CD4-positive, alpha-beta T cell (primary cell): ENCODE measurements at regions of chr4 and their contacts with region 1.

Region 1: DNA sequence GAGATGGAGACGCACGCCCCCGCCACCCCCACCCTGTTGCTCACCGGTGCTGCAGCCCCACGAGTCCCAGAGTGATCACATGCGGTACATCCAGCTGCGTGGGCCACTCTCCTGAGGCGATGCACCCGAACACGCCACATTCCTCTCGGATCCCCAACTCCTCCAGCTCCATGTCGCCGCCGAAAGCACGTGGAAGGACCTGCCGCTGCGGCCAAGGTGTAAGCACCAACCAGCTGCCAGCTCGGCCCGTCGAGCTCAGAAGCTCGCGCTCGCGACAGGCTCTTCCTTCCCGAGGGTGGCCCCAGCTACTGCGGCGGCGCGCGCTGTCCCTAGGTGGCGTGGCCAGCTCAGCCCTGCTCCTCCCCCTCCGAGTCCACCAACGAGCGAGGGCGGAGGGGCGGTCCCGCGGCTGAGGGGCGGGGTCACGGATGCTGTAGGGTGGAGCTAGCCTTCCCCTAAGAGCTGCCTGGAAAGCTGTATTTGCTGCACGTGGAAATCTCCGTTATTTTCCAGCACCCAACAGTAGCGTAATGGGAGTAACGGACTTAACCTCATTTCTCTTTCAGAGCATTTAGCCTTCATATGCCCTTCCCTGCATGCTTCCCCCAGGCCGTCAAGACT is at the start of gene PPAT:
- DNase-seq: peak; percentile 97 to 99 (median 99)
- ATAC-seq: peak; percentile 80
- H3K4me3 ChIP-seq: peak within 1 kb of the TSS; percentile 91
- H3K4me3 Mint-ChIP-seq: peak within 1 kb of the TSS; percentile 92
- H3K27ac ChIP-seq: peak within 1 kb of the TSS; percentile 59 to 91
- H3K27ac Mint-ChIP-seq: peak within 1 kb of the TSS; percentile 77
- H3K4me1 ChIP-seq: peaks cover 26% of the 10 kb centered on the region
- H3K4me1 Mint-ChIP-seq: peaks cover 41% of the 10 kb centered on the region
- H3K27me3 ChIP-seq: no peaks in the 10 kb centered on the region
- H3K27me3 Mint-ChIP-seq: no peaks in the 10 kb centered on the region
- CTCF ChIP-seq: peak; percentile 23
- total RNA-seq, gene PPAT: 4.7 to 6.3 TPM

Region 2: GRCh38 chr4:55853484-55854046 is 581.9 kb before region 1 on chr4 and contains the start of gene EXOC1:
- CTCF ChIA-PET with region 1: no interaction called
- POLR2A ChIA-PET with region 1: no interaction called
- intact Hi-C with region 1: loop called in 1 of 2 experiments (anchors 10 kb)
- DNase-seq: peak; percentile 93 to 99 (median 97)
- ATAC-seq: peak; percentile 95
- H3K4me3 ChIP-seq: peak within 1 kb of the TSS; percentile 96
- H3K4me3 Mint-ChIP-seq: no peak within 1 kb of the TSS
- H3K27ac ChIP-seq: peak within 1 kb of the TSS; percentile 68 to 86
- H3K27ac Mint-ChIP-seq: peak within 1 kb of the TSS; percentile 60
- H3K4me1 ChIP-seq: peaks cover 28% of the 10 kb centered on the region
- H3K4me1 Mint-ChIP-seq: peaks cover 33% of the 10 kb centered on the region
- H3K27me3 ChIP-seq: no peaks in the 10 kb centered on the region
- H3K27me3 Mint-ChIP-seq: no peaks in the 10 kb centered on the region
- CTCF ChIP-seq: no peak
- total RNA-seq, gene EXOC1: 15.2 to 15.7 TPM

Region 3: DNA sequence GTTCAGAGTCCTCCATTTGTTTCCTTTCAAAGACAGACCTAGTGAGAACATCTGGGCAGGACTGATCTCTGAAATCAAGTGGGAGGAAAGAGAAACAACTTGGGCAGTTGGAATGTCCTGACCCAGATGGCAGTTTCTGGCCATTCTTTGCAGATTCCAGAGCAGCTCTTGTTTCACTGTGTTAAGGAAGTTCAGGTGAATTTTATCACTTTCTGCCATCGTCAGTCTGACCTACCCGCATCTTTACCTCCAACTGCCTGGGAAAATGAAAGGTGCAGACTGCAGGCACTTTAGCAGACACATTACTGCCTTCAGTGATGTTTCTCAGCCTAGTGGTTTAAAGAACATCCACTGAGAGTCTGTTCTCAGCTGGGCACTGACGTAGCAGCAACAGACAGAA is 270.5 kb before region 1 on chr4:
- CTCF ChIA-PET with region 1: no interaction called
- POLR2A ChIA-PET with region 1: no interaction called
- intact Hi-C with region 1: no loop called
- DNase-seq: no peak
- ATAC-seq: no peak
- H3K4me3 ChIP-seq: no peak overlapping the region
- H3K4me3 Mint-ChIP-seq: no peak overlapping the region
- H3K27ac ChIP-seq: no peak overlapping the region
- H3K27ac Mint-ChIP-seq: no peak overlapping the region
- H3K4me1 ChIP-seq: no peaks in the 10 kb centered on the region
- H3K4me1 Mint-ChIP-seq: no peaks in the 10 kb centered on the region
- H3K27me3 ChIP-seq: no peaks in the 10 kb centered on the region
- H3K27me3 Mint-ChIP-seq: peaks cover 5% of the 10 kb centered on the region
- CTCF ChIP-seq: no peak

Region 4: DNA sequence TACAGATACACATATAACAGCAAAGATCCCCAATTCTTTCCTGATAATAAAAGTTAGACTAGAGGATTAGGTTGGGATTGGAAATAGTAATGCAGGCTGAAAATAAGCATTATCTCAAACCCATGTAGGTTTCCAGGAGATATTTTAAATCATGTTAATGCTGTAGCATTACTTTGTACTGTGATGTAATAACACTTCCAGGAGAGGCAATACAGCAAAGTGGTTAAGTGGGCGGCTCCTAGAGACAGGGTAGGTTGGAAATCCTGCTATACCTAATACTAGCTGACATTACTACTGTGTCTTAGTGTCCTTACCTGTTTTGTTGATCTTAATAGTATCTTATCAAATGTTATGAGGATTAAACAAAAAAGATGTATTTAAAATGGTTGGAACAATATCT is 10.3 kb after region 1 on chr4:
- CTCF ChIA-PET with region 1: no interaction called
- POLR2A ChIA-PET with region 1: interaction called, 14 read pairs
- intact Hi-C with region 1: no loop called
- DNase-seq: no peak
- ATAC-seq: no peak
- H3K4me3 ChIP-seq: no peak overlapping the region
- H3K4me3 Mint-ChIP-seq: no peak overlapping the region
- H3K27ac ChIP-seq: no peak overlapping the region
- H3K27ac Mint-ChIP-seq: no peak overlapping the region
- H3K4me1 ChIP-seq: no peaks in the 10 kb centered on the region
- H3K4me1 Mint-ChIP-seq: peaks cover 9% of the 10 kb centered on the region
- H3K27me3 ChIP-seq: no peaks in the 10 kb centered on the region
- H3K27me3 Mint-ChIP-seq: no peaks in the 10 kb centered on the region
- CTCF ChIP-seq: no peak

Region 5: DNA sequence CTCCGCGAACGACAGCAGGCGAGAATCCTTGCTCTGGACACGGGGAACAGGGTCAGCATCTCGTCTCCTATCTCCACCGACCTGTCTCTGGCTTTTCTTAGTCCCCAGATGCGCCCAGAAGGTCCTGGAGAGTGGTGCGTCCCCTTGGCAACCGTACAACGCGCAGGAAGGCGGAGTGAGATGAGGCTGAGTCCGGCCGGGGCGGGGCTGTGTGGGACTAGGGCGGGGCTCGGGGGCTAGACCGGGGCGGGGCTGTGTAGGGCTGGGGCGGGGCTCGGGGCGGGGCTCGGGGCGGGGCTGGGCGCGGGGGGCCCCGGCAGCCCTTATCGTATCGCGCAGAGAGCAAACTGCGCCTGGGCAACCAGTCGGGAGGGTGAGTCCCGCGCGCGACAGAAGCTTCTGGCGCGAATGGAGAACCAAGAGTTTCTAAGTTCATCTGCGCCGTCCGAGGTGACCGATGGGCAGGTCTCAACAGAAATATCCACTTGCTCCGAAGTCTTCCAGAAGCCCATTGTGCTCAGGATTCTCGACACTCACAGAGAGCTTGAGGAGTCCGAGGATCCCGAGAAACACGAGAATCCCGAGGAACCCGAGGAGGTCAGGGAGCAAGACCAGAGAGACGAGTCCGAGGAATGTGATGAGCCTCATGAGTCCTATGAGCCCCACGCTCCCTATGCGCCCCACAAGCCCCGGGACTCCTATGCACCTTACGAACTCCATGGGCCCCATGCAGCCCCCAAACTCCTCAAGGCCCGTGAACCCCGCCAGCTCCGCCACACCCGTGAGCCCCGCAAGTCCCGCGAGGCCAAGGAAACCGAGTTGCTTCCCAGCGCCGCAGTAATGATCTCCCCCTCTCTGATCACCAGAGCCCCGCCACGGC is 95.1 kb after region 1 on chr4:
- CTCF ChIA-PET with region 1: no interaction called
- POLR2A ChIA-PET with region 1: interaction called, 16 read pairs
- intact Hi-C with region 1: no loop called
- DNase-seq: peak; percentile 64 to 89 (median 74)
- ATAC-seq: peak; percentile 96
- H3K4me3 ChIP-seq: peak overlapping the region; percentile 82
- H3K4me3 Mint-ChIP-seq: peak overlapping the region; percentile 79
- H3K27ac ChIP-seq: no peak overlapping the region
- H3K27ac Mint-ChIP-seq: no peak overlapping the region
- H3K4me1 ChIP-seq: peaks cover 18% of the 10 kb centered on the region
- H3K4me1 Mint-ChIP-seq: no peaks in the 10 kb centered on the region
- H3K27me3 ChIP-seq: peaks cover 17 to 23% of the 10 kb centered on the region in 2 experiments
- H3K27me3 Mint-ChIP-seq: no peaks in the 10 kb centered on the region
- CTCF ChIP-seq: no peak

Region 6: GRCh38 chr4:56907489-56908205 is 472.2 kb after region 1 on chr4 and contains the start of gene REST:
- CTCF ChIA-PET with region 1: interaction called, 5 read pairs
- POLR2A ChIA-PET with region 1: interaction called, 117 read pairs
- intact Hi-C with region 1: loop called (anchors 2 to 10 kb)
- DNase-seq: peak; percentile 68 to 95 (median 82)
- ATAC-seq: peak; percentile 64
- H3K4me3 ChIP-seq: peak within 1 kb of the TSS; percentile 98
- H3K4me3 Mint-ChIP-seq: peak within 1 kb of the TSS; percentile 92
- H3K27ac ChIP-seq: peak within 1 kb of the TSS; percentile 22 to 94
- H3K27ac Mint-ChIP-seq: peak within 1 kb of the TSS; percentile 84
- H3K4me1 ChIP-seq: peaks cover 33% of the 10 kb centered on the region
- H3K4me1 Mint-ChIP-seq: peaks cover 52% of the 10 kb centered on the region
- H3K27me3 ChIP-seq: no peaks in the 10 kb centered on the region
- H3K27me3 Mint-ChIP-seq: no peaks in the 10 kb centered on the region
- CTCF ChIP-seq: no peak
- total RNA-seq, gene REST: 56.8 to 57.6 TPM